ENCODE measurements at regions of chr3 and their contacts with region 1.

Region 1: GRCh38 chr3:195850857-195851543 is 39.3 kb upstream of the MUC4 start:
- DNase-seq: peak; percentile 93
- H3K4me3 Mint-ChIP-seq: peak overlapping the region; percentile 16
- H3K27ac Mint-ChIP-seq: no peak overlapping the region
- H3K4me1 Mint-ChIP-seq: peaks cover 4% of the 10 kb centered on the region
- H3K27me3 Mint-ChIP-seq: peaks cover 2% of the 10 kb centered on the region

Region 2: GRCh38 chr3:195297446-195297845 is 553.6 kb before region 1 on chr3:
- CTCF ChIA-PET with region 1: no interaction called
- POLR2A ChIA-PET with region 1: no interaction called
- intact Hi-C with region 1: no loop called
- DNase-seq: no peak
- H3K4me3 Mint-ChIP-seq: no peak overlapping the region
- H3K27ac Mint-ChIP-seq: no peak overlapping the region
- H3K4me1 Mint-ChIP-seq: no peaks in the 10 kb centered on the region
- H3K27me3 Mint-ChIP-seq: no peaks in the 10 kb centered on the region

Region 3: GRCh38 chr3:195815169-195815771 is 35.7 kb before region 1 on chr3:
- CTCF ChIA-PET with region 1: interaction called, 11 read pairs
- POLR2A ChIA-PET with region 1: no interaction called
- intact Hi-C with region 1: no loop called
- DNase-seq: peak; percentile 47
- H3K4me3 Mint-ChIP-seq: no peak overlapping the region
- H3K27ac Mint-ChIP-seq: no peak overlapping the region
- H3K4me1 Mint-ChIP-seq: no peaks in the 10 kb centered on the region
- H3K27me3 Mint-ChIP-seq: peaks cover 3% of the 10 kb centered on the region

Region 4: DNA sequence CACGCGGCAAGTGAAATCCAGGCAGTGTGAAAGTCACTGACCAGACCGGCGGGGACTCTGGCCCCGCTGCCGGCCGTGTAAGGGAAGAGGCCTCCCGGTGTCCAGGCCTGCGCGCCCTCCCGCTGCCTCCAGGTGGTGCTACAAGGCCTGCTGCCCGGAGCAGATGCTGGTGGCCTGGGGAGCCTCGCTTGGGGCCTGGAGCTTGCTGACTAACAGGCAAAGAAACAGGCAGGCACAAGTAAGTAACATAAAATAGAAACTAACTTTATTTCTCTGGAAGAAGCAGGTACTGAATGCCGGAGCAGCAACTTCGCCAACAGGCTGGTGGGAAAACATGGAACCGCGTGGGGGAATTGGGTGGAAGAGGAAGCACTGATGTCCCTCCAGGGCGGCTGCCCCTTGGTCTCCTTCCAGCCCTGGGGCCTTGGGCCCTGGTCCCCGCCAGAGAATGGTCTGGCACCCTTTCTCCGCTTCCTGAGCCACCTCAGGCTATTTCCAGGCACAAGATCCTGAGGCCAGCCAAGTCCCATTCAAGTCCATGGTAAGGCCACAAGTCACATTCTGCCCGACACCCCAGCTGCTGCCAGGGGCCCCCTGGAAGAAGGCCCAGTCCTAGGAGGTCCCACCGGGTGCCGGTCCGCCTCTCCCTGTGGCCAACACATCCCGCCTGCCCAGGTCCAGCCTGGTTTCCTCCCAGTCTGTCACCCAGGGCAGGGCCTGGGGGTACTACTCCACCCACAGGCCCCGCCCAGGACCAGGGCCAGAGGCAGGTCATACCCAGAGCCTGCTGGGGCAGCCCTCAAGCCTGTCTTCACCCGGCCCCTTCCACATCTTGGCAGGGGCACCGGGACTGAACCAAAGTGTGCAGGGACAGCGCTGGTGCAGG is 12.4 kb after region 1 on chr3:
- CTCF ChIA-PET with region 1: interaction called, 24 read pairs
- POLR2A ChIA-PET with region 1: no interaction called
- intact Hi-C with region 1: no loop called
- DNase-seq: peak; percentile 82
- H3K4me3 Mint-ChIP-seq: no peak overlapping the region
- H3K27ac Mint-ChIP-seq: no peak overlapping the region
- H3K4me1 Mint-ChIP-seq: peaks cover 6% of the 10 kb centered on the region
- H3K27me3 Mint-ChIP-seq: no peaks in the 10 kb centered on the region

Region 5: DNA sequence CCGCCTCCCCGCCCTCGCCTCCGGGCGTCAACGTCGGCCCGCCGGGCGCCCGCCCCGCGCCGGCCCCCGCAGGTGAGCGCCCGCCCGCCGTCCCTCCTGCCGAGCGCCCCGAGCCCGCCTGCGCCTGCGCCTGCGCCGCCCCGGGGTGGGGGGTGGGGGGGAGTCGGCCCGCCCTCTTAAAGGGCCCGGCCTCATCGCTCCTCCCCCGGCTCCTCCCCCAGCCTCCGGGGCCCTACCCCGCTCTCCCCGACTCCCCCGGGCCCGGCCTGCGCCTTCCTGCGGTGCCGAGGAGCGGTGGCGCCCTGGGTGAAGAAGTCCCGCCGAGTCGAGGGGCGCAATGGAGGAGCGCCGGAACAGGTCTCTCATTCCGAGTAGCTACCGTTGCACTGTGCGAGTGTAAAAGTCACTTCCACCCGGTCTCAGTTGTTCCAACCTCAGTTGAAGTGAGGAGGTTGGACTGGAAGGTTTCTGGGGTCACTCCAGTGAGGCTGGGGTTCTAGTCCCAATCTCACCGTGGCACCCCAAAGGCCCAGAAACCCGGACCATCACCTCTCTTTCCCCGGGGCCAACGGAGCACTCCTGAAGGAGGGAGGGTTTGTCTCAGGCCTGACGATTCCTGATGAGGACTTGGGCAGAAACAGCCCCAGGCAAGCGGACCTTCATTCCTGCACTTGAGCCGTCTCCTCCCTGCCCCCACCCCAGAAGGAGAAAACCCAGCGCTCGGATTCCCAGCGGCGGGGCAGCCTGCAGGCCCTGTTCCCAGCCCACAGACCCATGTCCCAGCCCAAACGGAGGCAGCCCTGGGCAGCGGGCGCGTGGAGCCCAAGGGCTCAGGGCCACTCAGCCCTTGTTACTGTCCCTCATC is 58.9 kb after region 1 on chr3:
- CTCF ChIA-PET with region 1: interaction called, 99 read pairs
- POLR2A ChIA-PET with region 1: no interaction called
- intact Hi-C with region 1: no loop called
- DNase-seq: peak; percentile 91
- H3K4me3 Mint-ChIP-seq: peak overlapping the region; percentile 66
- H3K27ac Mint-ChIP-seq: peak overlapping the region; percentile 54
- H3K4me1 Mint-ChIP-seq: peaks cover 28% of the 10 kb centered on the region
- H3K27me3 Mint-ChIP-seq: no peaks in the 10 kb centered on the region

Region 6: DNA sequence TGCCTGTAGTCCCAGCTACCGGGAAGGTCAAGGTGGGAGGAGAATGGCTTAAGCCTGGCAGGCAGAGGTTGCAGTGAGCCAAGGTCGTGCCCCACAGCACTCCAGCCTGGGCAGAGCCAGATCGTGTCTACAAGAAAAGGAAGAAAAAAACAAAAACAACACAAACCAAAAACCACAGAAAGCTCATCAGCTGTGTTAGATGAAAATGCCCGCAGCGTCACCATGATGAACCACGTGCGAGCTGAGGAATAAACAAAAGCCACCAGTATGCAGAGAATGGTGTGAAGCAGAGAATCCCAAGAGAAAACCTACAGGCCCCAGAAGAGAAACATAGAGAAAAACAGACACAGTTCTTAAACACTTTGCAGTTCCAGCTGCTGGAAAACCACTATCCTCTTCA is 506.9 kb after region 1 on chr3:
- CTCF ChIA-PET with region 1: no interaction called
- POLR2A ChIA-PET with region 1: no interaction called
- intact Hi-C with region 1: no loop called
- DNase-seq: no peak
- H3K4me3 Mint-ChIP-seq: no peak overlapping the region
- H3K27ac Mint-ChIP-seq: no peak overlapping the region
- H3K4me1 Mint-ChIP-seq: peaks cover 6% of the 10 kb centered on the region
- H3K27me3 Mint-ChIP-seq: no peaks in the 10 kb centered on the region

Measured in activated CD4-positive, alpha-beta memory T cell treated with anti-CD3 and anti-CD28 coated beads for 36 hours (primary cell).